A673 (cell line): ENCODE measurements at regions of chr3 and their contacts with region 1.

Region 1: DNA sequence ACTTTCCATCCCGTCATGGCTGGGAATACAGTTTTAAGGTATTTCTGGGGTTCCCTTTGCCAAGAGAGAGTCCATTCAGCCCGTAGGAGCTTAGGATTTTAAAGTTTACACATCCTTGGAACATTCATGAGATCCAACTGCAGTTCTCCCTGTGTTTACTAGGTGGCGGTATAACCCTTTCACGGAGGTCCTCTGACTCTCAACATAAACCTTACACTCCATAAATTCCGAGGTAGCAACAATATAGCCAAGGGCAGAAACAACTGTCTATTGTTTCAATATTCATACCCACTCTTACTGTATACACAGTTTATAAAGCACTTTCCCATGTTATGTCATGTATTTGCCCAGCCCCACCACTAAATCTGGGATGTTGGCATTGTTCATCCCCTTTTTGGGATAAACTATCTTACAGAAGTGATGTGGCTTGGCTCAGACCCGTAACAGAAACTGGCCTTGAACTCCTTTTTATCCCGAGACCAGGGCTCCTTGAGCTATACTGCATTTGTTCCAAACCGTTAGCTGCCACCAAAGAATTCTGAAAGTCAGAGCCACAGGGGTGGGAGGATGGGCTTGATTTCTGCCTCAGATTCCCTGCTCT is 69.2 kb upstream of the COL6A5 start:
- DNase-seq: peak; percentile 72
- H3K4me3 ChIP-seq: no peak overlapping the region
- H3K27ac ChIP-seq: no peak overlapping the region
- H3K4me1 ChIP-seq: no peaks in the 10 kb centered on the region
- H3K27me3 ChIP-seq: peaks cover 3% of the 10 kb centered on the region
- CTCF ChIP-seq: peak; percentile 87

Region 2: DNA sequence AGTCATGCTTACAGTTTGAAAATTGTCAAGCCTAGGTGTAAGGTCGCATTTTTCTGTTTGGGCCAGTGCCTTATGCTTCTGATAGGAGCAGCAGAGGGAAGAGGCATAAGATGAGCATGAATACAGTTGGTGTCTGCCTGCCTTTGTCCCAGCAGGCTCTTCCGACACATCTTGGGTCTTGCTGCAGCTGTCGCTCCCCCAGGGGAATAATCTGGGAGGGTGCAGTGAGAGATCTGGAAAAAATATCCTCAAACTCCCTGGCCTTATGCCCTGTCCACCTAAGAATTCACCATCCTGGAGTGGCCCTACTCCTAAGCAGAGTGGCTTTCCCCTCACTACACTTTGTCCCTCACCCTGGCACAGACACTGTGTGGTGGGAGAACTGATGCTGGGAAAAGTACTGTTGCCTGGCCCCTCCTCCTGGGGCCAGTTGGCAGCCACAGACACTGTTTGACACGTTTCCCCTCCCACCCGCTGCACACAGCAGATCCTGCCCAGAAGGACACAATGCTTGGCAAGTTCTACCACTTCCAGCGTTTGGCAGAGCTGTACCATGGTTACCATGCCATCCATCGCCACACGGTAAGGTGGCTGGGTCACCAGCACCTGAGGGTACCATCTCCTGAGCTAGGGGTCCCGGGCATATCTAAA is 769.0 kb before region 1 on chr3:
- CTCF ChIA-PET with region 1: no interaction called
- POLR2A ChIA-PET with region 1: no interaction called
- intact Hi-C with region 1: no loop called
- DNase-seq: no peak
- H3K4me3 ChIP-seq: no peak overlapping the region
- H3K27ac ChIP-seq: no peak overlapping the region
- H3K4me1 ChIP-seq: no peaks in the 10 kb centered on the region
- H3K27me3 ChIP-seq: no peaks in the 10 kb centered on the region
- CTCF ChIP-seq: no peak

Region 3: GRCh38 chr3:130539005-130539404 is 262.7 kb after region 1 on chr3:
- CTCF ChIA-PET with region 1: interaction called, 10 read pairs
- POLR2A ChIA-PET with region 1: no interaction called
- intact Hi-C with region 1: loop called (anchors 1 kb)
- DNase-seq: peak; percentile 81
- H3K4me3 ChIP-seq: no peak overlapping the region
- H3K27ac ChIP-seq: no peak overlapping the region
- H3K4me1 ChIP-seq: peaks cover 20% of the 10 kb centered on the region
- H3K27me3 ChIP-seq: peaks cover 27% of the 10 kb centered on the region
- CTCF ChIP-seq: peak; percentile 78

Region 4: DNA sequence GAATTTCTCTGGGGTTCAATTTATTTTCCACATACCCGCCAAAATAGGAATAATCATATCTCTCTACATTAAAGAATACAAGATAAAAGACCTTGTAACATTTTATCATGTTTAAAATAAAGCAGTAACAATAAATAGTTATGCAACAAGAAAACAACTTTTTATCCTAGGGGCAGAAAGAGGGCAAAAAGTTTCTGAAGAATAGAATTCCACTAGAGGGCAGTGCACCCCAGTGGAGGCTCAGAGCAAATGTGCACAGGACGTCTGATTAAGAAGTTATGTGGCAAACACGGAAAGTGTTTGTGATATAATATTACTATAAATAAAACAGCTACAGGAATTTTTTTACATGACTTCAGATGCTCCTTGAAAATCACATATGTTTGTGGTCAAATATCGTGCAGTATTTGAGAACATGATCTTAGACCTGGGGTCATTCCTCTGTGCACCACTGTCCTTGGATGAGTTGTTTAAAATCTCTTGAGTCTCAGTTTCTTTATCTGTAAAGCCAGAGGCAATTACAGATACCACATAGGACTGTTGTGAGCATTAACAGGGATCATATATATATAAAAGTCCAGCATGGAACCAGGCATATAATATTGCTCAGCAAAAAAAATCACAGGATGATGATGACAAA is 483.5 kb after region 1 on chr3:
- CTCF ChIA-PET with region 1: no interaction called
- POLR2A ChIA-PET with region 1: no interaction called
- intact Hi-C with region 1: loop called (anchors 10 kb)
- DNase-seq: peak; percentile 72
- H3K4me3 ChIP-seq: no peak overlapping the region
- H3K27ac ChIP-seq: no peak overlapping the region
- H3K4me1 ChIP-seq: no peaks in the 10 kb centered on the region
- H3K27me3 ChIP-seq: no peaks in the 10 kb centered on the region
- CTCF ChIP-seq: peak; percentile 88

Region 5: DNA sequence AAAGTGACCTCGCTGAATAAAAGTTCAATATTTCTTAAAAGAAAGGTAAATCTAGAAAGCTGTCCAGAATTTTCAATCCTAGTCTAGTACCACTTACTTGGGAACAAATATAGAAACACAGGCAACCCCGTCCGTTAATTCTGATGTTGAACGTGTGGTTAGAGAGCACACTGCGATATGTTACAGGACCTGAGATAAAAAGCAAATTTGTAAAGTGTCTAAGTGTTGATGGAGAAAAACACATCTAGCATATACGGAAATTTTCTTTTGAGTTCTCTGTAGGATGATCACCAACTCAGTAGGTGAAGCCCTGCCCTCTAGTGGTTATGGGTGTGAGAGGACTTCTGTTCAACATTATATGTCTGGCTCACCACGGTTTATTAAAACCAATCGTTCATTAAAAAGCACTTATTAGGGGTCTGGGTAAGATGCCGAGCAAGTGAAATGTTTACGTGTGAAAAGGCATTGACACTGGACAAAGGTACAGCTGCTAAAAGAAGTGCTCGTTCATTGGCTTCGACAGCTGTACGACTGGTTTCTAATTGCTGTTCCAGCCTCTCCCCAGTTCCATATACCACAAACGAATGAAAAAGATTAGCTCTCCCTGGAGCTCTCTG is 616.6 kb after region 1 on chr3:
- CTCF ChIA-PET with region 1: no interaction called
- POLR2A ChIA-PET with region 1: no interaction called
- intact Hi-C with region 1: loop called (anchors 5 kb)
- DNase-seq: peak; percentile 83
- H3K4me3 ChIP-seq: peak overlapping the region; percentile 79
- H3K27ac ChIP-seq: peak overlapping the region; percentile 89
- H3K4me1 ChIP-seq: peaks cover 7% of the 10 kb centered on the region
- H3K27me3 ChIP-seq: no peaks in the 10 kb centered on the region
- CTCF ChIP-seq: peak; percentile 91

Region 6: DNA sequence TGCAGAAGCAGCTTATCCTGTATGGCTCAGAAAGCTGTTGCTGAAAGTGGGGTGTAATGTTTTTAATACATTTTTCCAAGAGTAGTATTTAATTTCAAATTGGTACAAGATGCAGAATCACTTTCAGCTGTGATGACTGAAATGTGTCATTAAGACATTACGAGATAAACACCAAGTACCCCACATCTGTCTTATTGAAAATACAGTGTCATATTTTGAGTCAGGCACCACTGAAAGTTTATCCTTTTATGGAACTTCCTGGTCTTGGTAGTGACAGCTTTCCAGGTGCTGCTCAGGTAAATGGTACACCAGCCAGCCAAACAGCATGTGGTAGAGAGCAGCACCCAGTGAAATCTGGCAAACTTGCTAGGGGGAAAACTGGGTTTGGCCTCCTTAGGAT is 733.4 kb after region 1 on chr3:
- CTCF ChIA-PET with region 1: no interaction called
- POLR2A ChIA-PET with region 1: no interaction called
- intact Hi-C with region 1: loop called (anchors 10 kb)
- DNase-seq: no peak
- H3K4me3 ChIP-seq: no peak overlapping the region
- H3K27ac ChIP-seq: peak overlapping the region; percentile 1
- H3K4me1 ChIP-seq: peaks cover 17% of the 10 kb centered on the region
- H3K27me3 ChIP-seq: no peaks in the 10 kb centered on the region
- CTCF ChIP-seq: no peak

Region 7: DNA sequence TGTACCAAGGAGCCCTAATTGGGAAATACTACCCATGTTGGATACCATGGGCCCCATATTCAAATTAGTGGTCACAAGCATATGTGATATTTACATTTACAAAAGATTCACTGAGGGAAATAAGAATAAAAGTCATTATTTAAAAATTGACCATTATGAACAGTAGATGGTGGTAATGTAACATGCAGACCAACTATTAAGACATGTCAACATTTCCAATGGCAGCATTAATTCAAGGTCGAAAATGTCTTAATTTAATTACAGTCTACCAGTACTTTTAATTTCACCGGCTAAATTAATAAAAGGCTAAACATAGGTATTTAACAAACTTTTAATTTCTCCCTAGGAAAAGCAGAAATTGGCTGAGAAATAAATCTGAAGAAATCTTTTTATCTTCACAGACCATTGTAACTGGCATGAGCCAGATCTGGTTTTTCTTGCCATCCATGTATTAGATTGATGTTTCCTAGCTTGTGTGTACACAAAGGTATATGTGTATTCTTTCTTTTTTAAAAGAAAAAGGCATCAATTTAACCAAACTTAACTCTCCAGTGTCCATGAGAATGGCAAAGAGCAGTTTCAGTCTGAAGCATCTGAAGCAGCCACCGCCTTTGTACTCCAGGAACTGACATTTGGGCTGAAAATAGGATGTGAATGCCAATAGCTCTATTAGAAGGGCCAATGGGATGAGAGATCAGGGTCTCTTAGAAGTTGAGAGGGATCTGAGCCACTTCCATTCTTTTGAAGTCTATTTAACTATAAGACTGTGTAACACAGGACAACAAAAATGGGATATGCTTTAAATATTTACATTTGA is 776.9 kb after region 1 on chr3:
- CTCF ChIA-PET with region 1: no interaction called
- POLR2A ChIA-PET with region 1: no interaction called
- intact Hi-C with region 1: no loop called
- DNase-seq: peak; percentile 16
- H3K4me3 ChIP-seq: no peak overlapping the region
- H3K27ac ChIP-seq: no peak overlapping the region
- H3K4me1 ChIP-seq: no peaks in the 10 kb centered on the region
- H3K27me3 ChIP-seq: no peaks in the 10 kb centered on the region
- CTCF ChIP-seq: peak; percentile 38